Ovary (tissue), 10 donors: ENCODE measurements at regions of chr2 and their contacts with region 1.

Region 1: GRCh38 chr2:86562922-86563649 is at the start of gene CHMP3:
- DNase-seq: peak; percentile 96 to 98 (median 97)
- H3K4me3 ChIP-seq: peak within 1 kb of the TSS; percentile 89
- H3K27ac ChIP-seq: peak within 1 kb of the TSS; percentile 97 to 100
- H3K4me1 ChIP-seq: peaks cover 8% of the 10 kb centered on the region
- H3K27me3 ChIP-seq: no peaks in the 10 kb centered on the region
- CTCF ChIP-seq: no peak
- EP300 ChIP-seq: no peak
- POLR2A ChIP-seq: peak; percentile 78
- total RNA-seq, gene CHMP3: 38.6 to 127 (median 94.2) TPM

Region 2: DNA sequence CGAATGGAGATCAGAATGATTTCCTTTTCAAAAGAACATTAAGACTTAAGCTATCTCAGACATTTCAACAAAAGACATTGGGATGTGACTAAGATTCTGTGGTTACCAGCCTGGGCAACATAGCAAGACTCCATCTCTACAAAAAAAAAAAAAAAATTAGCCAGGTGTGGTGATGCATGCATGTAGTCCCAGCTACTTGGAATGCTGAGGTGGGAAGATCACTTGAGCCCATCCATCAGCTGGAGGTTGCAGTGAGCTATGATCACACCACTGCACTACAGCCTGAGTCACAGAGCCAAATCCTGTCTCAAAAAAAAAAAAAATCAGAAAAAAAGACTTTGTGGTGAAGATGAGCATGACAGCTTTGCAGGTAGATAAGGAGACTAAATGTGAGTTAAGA is 47.8 kb after region 1 on chr2:
- intact Hi-C with region 1: no loop called
- DNase-seq: no peak
- H3K4me3 ChIP-seq: no peak overlapping the region
- H3K27ac ChIP-seq: no peak overlapping the region
- H3K4me1 ChIP-seq: no peaks in the 10 kb centered on the region
- H3K27me3 ChIP-seq: no peaks in the 10 kb centered on the region
- CTCF ChIP-seq: no peak
- EP300 ChIP-seq: no peak
- POLR2A ChIP-seq: no peak

Region 3: DNA sequence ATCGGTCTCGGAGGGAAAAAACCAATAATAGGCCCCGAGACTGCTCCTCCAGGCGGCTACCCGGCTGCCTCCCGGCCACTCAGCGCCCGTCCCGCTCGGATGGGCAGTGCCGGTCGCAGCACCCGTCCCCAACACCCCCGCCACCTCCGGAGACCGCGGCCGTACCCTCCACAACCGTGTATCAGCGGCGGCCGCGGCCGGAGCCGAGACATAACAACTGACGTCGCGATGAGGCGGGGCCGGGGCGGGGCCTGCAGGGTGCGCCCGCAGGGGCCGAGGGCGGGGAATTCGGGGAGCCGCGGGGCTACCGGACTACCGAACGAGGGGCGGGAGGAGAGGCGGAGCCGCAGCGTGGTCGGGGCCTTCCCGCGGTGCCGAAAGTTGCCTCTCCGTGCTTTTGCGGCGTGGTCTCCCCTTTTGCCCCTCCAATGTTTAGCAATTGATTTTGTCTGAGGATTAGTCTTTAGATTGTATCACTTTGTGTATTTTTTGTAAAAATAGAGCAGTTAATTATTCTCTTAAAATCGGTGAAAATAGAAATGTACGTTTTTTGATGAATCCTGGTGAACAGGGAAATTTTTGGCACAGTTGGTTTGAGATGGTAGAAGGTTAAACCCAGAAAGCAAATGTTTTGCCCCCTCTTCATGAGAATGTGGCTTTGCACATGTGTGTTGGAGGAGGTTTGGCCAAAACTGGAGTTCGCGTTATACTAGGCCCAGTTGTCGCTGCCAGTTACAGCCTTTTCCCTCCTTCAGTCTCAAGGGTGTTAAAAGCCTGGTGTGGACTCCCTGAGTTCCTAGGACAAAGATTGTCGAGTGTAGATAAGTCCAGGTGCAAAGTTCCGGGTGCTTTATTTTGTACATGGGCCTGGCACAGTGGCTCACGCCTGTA is 60.8 kb after region 1 on chr2 and contains the start of gene RNF103:
- intact Hi-C with region 1: loop called in 2 of 4 experiments (anchors 2 kb)
- DNase-seq: peak; percentile 96 to 98 (median 98)
- H3K4me3 ChIP-seq: peak within 1 kb of the TSS; percentile 50
- H3K27ac ChIP-seq: peak within 1 kb of the TSS; percentile 98
- H3K4me1 ChIP-seq: peaks cover 2% of the 10 kb centered on the region
- H3K27me3 ChIP-seq: no peaks in the 10 kb centered on the region
- CTCF ChIP-seq: no peak
- EP300 ChIP-seq: peak; percentile 26
- POLR2A ChIP-seq: peak; percentile 97
- total RNA-seq, gene RNF103: 24.9 to 38.4 (median 32.4) TPM

Region 4: GRCh38 chr2:86636842-86637241 is 73.8 kb after region 1 on chr2:
- intact Hi-C with region 1: no loop called
- DNase-seq: no peak
- H3K4me3 ChIP-seq: no peak overlapping the region
- H3K27ac ChIP-seq: no peak overlapping the region
- H3K4me1 ChIP-seq: no peaks in the 10 kb centered on the region
- H3K27me3 ChIP-seq: no peaks in the 10 kb centered on the region
- CTCF ChIP-seq: no peak
- EP300 ChIP-seq: no peak
- POLR2A ChIP-seq: no peak

Region 5: DNA sequence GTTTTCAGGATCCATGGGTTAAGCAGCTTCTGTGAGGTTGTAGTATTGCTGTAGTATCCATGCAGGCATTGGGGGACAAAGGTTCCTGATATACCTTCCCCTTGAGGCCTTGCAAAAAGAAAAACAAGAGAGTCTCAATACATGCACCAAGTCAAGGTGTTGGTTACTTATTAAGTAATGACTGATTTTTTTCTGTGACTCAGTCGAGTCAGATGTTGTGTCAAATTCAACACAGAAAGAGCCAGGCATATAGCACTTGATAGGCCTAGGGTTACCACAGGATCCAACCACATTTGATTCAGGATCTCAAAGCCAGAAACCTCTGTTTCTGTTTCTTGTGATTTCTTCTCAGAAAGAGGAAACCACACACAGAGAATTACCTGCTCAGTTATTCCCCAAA is 252.5 kb after region 1 on chr2:
- intact Hi-C with region 1: no loop called
- DNase-seq: no peak
- H3K4me3 ChIP-seq: no peak overlapping the region
- H3K27ac ChIP-seq: no peak overlapping the region
- H3K4me1 ChIP-seq: no peaks in the 10 kb centered on the region
- H3K27me3 ChIP-seq: no peaks in the 10 kb centered on the region
- CTCF ChIP-seq: no peak
- EP300 ChIP-seq: no peak
- POLR2A ChIP-seq: no peak